HCT116 (cell line): ENCODE measurements at regions of chr17 and their contacts with region 1.

Region 1: GRCh38 chr17:75940724-75941441 is at the start of gene FBF1:
- DNase-seq: peak; percentile 94
- ATAC-seq: peak; percentile 99
- H3K4me3 ChIP-seq: peak within 1 kb of the TSS; percentile 67 to 88
- H3K27ac ChIP-seq: peak within 1 kb of the TSS; percentile 69
- H3K4me1 ChIP-seq: peaks cover 10 to 17% of the 10 kb centered on the region in 2 experiments
- H3K27me3 ChIP-seq: no peaks in the 10 kb centered on the region
- CTCF ChIP-seq: no peak
- POLR2A ChIP-seq: peak; percentile 97
- RAD21 ChIP-seq: no peak
- total RNA-seq, gene FBF1: 22.8 TPM

Region 2: DNA sequence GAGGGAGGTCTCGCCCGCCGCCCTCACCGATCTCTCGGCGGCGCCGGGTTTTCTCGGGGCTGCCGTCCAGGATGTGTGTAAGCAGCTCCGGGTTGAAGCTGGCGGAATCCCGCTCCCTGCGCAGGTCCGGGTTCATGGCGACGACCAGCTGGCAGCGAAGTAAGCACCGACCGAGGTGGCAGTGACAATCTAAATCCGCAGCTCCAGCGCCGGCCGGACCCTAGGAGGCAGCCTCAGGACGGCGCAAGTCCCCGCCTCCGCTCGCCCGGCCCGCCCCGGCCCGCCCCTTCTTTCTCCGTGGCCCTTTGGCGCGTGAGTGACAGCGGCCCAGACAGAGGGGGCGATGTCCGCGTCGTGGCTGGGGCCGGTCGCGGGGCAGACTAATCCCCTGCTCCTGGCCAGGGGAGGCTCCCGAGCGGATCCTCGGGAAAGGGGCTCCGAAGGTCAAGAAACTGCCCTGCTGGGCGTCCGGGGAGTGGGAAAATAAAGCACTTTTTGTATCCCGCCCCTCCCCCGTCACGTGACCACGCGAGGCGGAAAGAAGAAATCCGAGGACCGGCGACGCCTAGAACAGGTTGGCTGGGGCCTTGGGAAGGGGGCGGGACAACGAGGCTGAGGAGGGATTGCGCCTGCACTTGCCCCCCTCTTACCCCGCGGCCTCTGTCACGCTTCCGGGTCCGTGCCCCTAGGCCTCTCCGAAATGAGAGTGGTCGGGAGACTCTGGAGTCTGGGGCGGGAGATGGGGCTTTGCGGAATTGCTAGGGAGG is 38.2 kb after region 1 on chr17 and contains the starts of genes ACOX1 and TEN1:
- CTCF ChIA-PET with region 1: interaction called, 3 read pairs
- POLR2A ChIA-PET with region 1: interaction called, 6 read pairs
- RAD21 ChIA-PET with region 1: no interaction called
- intact Hi-C with region 1: loop called (anchors 1 kb)
- DNase-seq: peak; percentile 97
- ATAC-seq: peak; percentile 93
- H3K4me3 ChIP-seq: peak within 1 kb of the TSS; percentile 63 to 95
- H3K27ac ChIP-seq: peak within 1 kb of the TSS; percentile 95
- H3K4me1 ChIP-seq: peaks cover 12 to 32% of the 10 kb centered on the region in 2 experiments
- H3K27me3 ChIP-seq: no peaks in the 10 kb centered on the region
- CTCF ChIP-seq: peak in 2 of 3 experiments; percentile 11 to 21; a peak in 1 of 6 replicates
- POLR2A ChIP-seq: peak; percentile 93
- RAD21 ChIP-seq: no peak
- total RNA-seq, gene ACOX1: 50.2 TPM
- total RNA-seq, gene TEN1: 18.5 TPM